Mammary epithelial cell (primary cell): ENCODE measurements at regions of chr15 and their contacts with region 1.

Region 1: DNA sequence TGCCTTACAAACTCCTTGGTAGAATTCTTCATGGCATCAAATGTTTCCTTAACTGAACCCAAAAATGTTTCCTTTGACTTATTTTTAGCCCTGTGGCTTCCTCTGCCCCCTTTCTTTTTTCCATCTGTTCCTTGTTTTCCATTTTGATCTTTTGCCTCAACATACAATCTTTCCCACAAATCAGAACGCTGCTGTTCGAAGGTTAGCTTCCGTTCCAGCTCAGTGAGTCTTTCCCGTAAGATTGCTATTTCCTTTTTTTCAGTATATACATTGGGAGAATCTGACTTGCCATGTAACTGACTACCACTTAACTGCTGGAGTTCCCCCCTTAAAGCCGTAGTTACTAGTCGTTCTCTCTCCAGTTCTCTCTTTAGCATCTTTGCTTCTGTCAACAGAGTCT is 41.2 kb downstream of the PIGB start:
- DNase-seq: no peak
- H3K4me3 ChIP-seq: no peak overlapping the region
- H3K27ac ChIP-seq: no peak overlapping the region
- H3K4me1 ChIP-seq: no peaks in the 10 kb centered on the region
- H3K27me3 ChIP-seq: no peaks in the 10 kb centered on the region
- CTCF ChIP-seq: no peak

Region 2: DNA sequence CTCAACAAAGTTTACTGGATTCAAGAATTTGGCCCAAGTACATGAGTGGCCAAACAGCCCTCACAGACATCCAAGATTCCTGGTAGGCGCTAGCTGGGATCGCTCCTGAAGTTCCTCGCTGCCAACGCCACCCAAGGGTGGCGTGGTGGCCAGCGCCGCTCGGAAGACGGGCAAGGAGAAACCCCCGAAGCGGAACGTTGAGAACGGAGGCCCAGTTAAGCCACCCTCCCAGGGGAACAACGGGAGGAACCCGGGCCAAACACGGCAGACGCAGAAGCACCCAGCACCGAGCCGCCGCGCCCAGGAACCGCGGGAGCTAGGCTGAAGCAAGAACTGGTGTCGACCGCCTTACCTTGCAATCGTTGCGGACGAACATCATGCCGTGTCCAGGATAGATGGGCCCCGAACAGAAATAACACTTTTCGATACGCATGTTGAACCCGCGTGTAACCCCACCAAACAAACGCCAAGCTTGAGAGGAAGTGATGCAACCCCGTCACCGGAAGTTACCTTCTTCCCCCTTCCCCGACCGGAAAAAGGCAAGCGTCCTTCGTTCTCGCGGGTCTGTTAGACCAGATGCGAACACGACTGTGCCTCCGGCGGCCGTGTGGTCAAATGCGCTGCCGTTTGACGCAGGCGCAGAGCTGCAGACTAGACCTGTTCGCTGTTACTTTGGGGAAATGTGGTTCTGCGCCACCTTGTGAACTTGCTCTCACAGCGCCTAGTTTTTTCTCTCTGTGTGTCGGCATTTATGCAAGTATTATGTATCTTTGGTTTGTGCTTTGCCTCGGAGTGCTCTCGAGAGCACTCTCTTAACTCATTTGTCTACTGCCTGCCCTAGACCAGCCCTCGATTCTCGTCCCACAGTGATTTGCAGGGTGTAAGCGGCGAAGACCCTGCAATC is 163.5 kb before region 1 on chr15 and contains the start of gene RSL24D1:
- CTCF ChIA-PET with region 1: interaction called, 19 read pairs
- dilution Hi-C with region 1: no loop called
- in situ Hi-C with region 1: no loop called
- intact Hi-C with region 1: no loop called
- DNase-seq: peak; percentile 99
- H3K4me3 ChIP-seq: peak within 1 kb of the TSS; percentile 65 to 97 (median 89)
- H3K27ac ChIP-seq: peak within 1 kb of the TSS; percentile 91
- H3K4me1 ChIP-seq: peaks cover 13% of the 10 kb centered on the region
- H3K27me3 ChIP-seq: no peaks in the 10 kb centered on the region
- CTCF ChIP-seq: peak; percentile 25 to 49
- total RNA-seq, gene RSL24D1: 94.7 to 114 TPM

Region 3: DNA sequence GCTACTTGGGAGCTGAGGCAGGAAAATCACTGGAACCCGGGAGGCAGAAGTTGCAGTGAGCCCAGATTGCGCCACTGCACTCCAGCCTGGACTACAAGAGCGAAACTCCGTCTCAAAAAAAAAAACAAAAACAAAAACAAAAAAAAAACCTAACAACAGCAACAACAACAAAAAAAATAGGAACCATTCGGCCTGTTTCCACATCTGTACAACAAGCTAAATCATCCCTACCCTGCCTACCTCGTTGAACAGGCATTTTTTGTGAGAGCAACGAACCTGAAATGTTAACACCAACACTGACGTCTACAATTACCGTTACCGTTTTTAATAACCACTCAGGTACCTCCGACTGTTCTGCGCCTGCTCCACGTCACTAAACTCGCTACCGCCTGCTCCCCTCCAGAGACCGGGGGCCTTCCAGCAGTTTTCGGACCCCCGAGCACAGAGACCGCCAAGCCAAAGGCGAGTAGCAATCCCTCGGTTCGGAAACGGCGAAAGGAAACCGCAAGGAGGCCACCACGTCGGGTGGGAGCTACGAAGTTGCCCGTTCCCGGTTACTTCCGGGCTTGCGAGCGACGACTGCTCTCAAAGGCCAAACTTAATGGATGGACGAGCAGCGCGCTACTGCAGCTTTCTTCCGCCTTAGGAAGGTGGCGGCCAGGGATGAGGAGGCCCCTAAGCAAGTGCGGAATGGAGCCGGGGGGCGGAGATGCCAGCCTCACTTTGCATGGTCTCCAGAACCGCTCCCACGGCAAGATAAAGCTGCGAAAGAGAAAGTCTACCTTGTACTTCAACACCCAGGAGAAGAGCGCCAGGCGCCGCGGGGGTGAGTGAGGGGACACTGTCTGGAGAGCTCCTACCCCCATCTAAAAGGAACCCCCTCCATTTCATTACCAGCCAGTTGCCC is 41.4 kb before region 1 on chr15 and contains the starts of genes PIGB and PIGBOS1:
- CTCF ChIA-PET with region 1: no interaction called
- dilution Hi-C with region 1: no loop called
- in situ Hi-C with region 1: no loop called
- intact Hi-C with region 1: no loop called
- DNase-seq: peak; percentile 85
- H3K4me3 ChIP-seq: peak within 1 kb of the TSS; percentile 63 to 88 (median 67)
- H3K27ac ChIP-seq: peak within 1 kb of the TSS; percentile 89
- H3K4me1 ChIP-seq: peaks cover 4% of the 10 kb centered on the region
- H3K27me3 ChIP-seq: no peaks in the 10 kb centered on the region
- CTCF ChIP-seq: no peak
- total RNA-seq, gene PIGB: 23.8 to 24.4 TPM
- total RNA-seq, gene PIGBOS1: 3.8 to 10.9 TPM